ENCODE measurements at regions of chr10 and their contacts with region 1.

Region 1: DNA sequence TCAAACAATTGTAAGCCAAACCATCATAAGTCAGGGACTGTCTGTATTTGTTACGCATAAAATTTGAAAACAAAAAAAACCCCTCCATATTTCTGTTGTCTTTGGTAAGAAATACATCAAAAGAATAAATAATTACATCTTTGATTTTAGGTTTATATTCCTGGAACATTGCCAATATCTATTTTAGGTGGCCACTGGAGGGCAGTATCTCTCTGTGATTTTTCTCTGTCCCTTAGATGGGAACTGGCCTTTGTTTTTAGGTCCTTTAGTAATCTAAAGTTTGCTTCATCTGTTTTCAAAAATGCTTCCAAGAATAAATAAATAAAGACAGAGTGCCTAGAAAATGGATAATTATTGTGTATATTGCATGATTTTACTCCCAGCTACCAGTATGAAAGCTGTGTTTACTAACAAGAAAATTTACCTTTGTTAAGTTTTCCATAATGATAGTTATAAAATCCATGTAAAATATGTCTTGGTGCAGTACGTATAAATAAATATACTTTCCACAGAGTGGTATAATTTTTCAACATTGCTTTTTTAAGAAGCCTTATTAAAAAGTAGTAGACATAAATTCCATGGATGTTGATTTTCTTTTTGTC is 64.2 kb downstream of the PHYHIPL start:
- DNase-seq: no peak
- ATAC-seq: peak in 1 of 2 donors; percentile 48
- H3K4me3 ChIP-seq: no peak overlapping the region
- H3K27ac ChIP-seq: peak overlapping the region in 1 of 4 donors; percentile 9
- H3K4me1 ChIP-seq: peaks cover 0 to 8% of the 10 kb centered on the region in 2 donors
- H3K27me3 ChIP-seq: no peaks in the 10 kb centered on the region
- CTCF ChIP-seq: peak; percentile 69 to 81 (median 70)
- POLR2A ChIP-seq: no peak

Region 2: DNA sequence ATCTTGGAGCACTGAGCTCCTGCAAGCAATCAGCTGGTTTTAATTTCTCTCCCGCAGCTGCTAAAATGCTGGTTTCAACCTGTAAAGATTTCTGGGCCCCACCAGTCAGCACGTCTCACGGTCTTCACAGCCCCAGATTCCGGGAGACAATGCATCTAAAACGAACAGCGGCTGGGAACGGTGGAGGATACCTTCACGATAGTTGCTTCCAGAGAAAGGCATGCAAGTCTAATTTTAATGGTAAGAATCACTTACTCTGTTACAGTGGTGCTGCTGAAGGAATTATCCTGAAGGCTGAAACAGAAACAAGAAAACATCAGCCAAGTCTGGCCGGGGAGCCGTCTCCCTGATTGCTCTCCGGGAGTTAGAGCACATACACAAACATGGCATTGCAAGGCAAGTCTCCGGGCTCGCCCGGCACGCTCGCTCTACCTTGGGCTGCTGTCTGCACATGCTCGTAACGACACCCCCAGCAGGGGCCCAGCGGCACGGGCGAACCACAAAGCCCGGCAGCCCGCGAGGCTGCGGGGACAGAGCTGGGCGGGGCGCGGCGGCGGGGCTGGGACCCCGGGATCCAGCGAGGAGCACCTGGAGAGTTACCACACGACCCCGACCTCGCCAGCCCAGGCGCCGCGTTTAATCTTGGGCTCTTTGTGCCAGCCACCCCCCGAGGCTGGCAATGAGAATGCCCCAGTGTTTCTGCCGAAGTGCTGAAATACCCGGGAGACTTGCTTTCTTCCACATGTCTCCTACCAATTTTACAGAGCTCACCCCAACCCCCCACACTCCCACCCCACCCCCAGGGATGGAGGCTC is 121.7 kb after region 1 on chr10 and contains the start of gene FAM13C:
- in situ Hi-C with region 1: no loop called
- intact Hi-C with region 1: loop called (anchors 5 kb)
- DNase-seq: peak; percentile 66 to 78
- ATAC-seq: peak; percentile 60 to 77
- H3K4me3 ChIP-seq: peak within 1 kb of the TSS; percentile 70 to 74 (median 72)
- H3K27ac ChIP-seq: peak within 1 kb of the TSS; percentile 89 to 96 (median 92)
- H3K4me1 ChIP-seq: peaks cover 40 to 49% of the 10 kb centered on the region in 2 donors
- H3K27me3 ChIP-seq: no peaks in the 10 kb centered on the region
- CTCF ChIP-seq: peak in 2 of 5 experiments; percentile 17 to 27
- POLR2A ChIP-seq: peak in 1 of 2 donors; percentile 61
- total RNA-seq, gene FAM13C: 6.0 to 125 (median 17.6) TPM

Region 3: DNA sequence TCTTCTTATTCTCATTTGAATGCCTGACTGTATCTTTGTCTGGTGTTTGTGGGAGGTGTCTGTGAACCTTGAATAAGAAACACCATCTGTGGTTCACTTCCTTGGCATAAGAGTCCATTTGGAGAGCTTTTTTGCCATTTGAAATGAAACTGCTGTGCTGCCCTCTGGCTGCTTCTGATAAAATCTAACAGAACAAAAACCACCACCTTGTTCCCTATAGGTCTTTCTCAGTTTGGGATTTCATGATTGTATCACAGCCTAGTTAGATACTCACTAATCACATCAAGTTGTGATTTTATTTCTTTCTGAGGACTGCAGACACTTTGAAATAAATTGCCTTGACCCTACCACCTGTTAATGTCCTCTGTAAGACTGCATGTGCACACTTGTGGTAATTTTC is 224.4 kb after region 1 on chr10:
- in situ Hi-C with region 1: loop called in 3 of 4 experiments (anchors 5 kb)
- intact Hi-C with region 1: loop called (anchors 1 kb)
- DNase-seq: peak in 1 of 2 donors; percentile 8
- ATAC-seq: peak; percentile 86 to 89
- H3K4me3 ChIP-seq: no peak overlapping the region
- H3K27ac ChIP-seq: no peak overlapping the region
- H3K4me1 ChIP-seq: peaks cover 0 to 11% of the 10 kb centered on the region in 2 donors
- H3K27me3 ChIP-seq: no peaks in the 10 kb centered on the region
- CTCF ChIP-seq: peak; percentile 51 to 61 (median 57)
- POLR2A ChIP-seq: no peak

Region 4: GRCh38 chr10:59606551-59606961 is 365.9 kb after region 1 on chr10:
- in situ Hi-C with region 1: loop called in 1 of 4 experiments (anchors 25 kb)
- intact Hi-C with region 1: no loop called
- DNase-seq: no peak
- ATAC-seq: no peak
- H3K4me3 ChIP-seq: no peak overlapping the region
- H3K27ac ChIP-seq: no peak overlapping the region
- H3K4me1 ChIP-seq: no peaks in the 10 kb centered on the region
- H3K27me3 ChIP-seq: no peaks in the 10 kb centered on the region
- CTCF ChIP-seq: no peak
- POLR2A ChIP-seq: no peak

Region 5: GRCh38 chr10:59817773-59818172 is 577.1 kb after region 1 on chr10:
- in situ Hi-C with region 1: loop called (anchors 10 to 25 kb)
- intact Hi-C with region 1: loop called (anchors 10 kb)
- DNase-seq: no peak
- ATAC-seq: no peak
- H3K4me3 ChIP-seq: no peak overlapping the region
- H3K27ac ChIP-seq: no peak overlapping the region
- H3K4me1 ChIP-seq: peaks cover 0 to 8% of the 10 kb centered on the region in 2 donors
- H3K27me3 ChIP-seq: no peaks in the 10 kb centered on the region
- CTCF ChIP-seq: no peak
- POLR2A ChIP-seq: no peak

Measured in gastrocnemius medialis (tissue), 4 donors.